HCT116 (cell line): ENCODE measurements at regions of chr11 and their contacts with region 1.

Region 1: GRCh38 chr11:68257475-68258362 is 14.1 kb downstream of the C11orf24 start:
- DNase-seq: peak; percentile 81
- ATAC-seq: peak; percentile 88
- H3K4me3 ChIP-seq: 0 out of 4 replicates have a peak overlapping the region, but pooled peaks of 1 of the 2 experiments have one; percentile 18
- H3K27ac ChIP-seq: no peak overlapping the region
- H3K4me1 ChIP-seq: peaks cover 3 to 17% of the 10 kb centered on the region in 2 experiments; a peak in 3 of 4 replicates
- H3K27me3 ChIP-seq: no peaks in the 10 kb centered on the region
- CTCF ChIP-seq: peak; percentile 79 to 94 (median 81)
- POLR2A ChIP-seq: no peak
- RAD21 ChIP-seq: peak; percentile 99

Region 2: GRCh38 chr11:68271781-68272608 is 14.3 kb after region 1 on chr11 and contains the start of gene C11orf24:
- CTCF ChIA-PET with region 1: interaction called, 10 read pairs
- POLR2A ChIA-PET with region 1: no interaction called
- RAD21 ChIA-PET with region 1: interaction called in 1 of 2 experiments, 3 read pairs
- intact Hi-C with region 1: no loop called
- DNase-seq: peak; percentile 79
- ATAC-seq: peak; percentile 86
- H3K4me3 ChIP-seq: peak within 1 kb of the TSS; percentile 97 to 98
- H3K27ac ChIP-seq: peak within 1 kb of the TSS; percentile 90
- H3K4me1 ChIP-seq: peaks cover 29 to 60% of the 10 kb centered on the region in 2 experiments
- H3K27me3 ChIP-seq: no peaks in the 10 kb centered on the region
- CTCF ChIP-seq: no peak
- POLR2A ChIP-seq: peak; percentile 87
- RAD21 ChIP-seq: no peak
- total RNA-seq, gene C11orf24: 37.8 TPM

Region 3: DNA sequence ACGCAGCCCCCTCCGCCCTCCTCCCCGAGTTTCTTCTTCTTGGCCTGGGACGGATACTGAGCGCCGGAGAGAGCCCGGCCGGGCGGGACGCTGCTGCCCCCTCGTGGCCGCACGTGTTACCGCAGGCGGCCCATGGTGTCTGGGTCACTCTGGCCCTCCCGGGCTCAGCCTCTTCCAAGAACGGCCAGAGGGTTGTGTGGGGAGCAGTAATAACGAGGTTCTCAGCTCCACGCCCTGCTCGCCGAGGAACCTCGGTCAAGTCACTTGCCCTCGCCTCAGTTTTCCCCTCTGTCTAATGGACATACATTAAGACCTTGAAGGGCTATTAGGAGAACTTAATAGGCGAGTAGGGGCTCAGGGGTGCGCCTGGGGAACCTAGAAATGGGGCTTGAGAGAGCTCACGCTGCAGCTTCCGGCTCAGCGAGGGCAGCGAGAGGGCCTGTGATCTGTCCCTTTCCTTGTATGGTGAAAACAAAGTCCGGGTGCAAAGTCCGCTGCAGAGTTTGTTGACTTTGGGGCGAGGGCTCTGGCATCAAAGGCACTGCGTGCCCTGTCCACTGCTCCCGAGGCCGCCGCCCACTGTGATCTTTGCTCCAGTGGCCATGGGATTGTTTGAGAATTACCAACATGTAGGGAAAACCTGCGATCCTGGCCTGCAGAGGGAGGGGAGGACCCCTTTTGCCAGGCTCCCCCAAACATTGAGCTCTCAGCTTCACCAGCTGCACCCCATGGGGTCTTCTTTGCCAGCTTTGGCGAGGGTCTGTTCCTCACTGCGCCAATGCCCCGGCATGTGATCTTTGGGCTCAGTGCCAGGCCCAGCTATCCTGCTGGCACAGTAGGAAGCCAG is 40.3 kb after region 1 on chr11:
- CTCF ChIA-PET with region 1: interaction called, 21 read pairs
- POLR2A ChIA-PET with region 1: interaction called, 3 read pairs
- RAD21 ChIA-PET with region 1: interaction called, 6 to 12 read pairs
- intact Hi-C with region 1: loop called (anchors 1 kb)
- DNase-seq: peak; percentile 52
- ATAC-seq: peak; percentile 97
- H3K4me3 ChIP-seq: peak overlapping the region in 1 of 2 experiments; percentile 19; a peak in 2 of 4 replicates
- H3K27ac ChIP-seq: no peak overlapping the region
- H3K4me1 ChIP-seq: peaks cover 18 to 35% of the 10 kb centered on the region in 2 experiments
- H3K27me3 ChIP-seq: no peaks in the 10 kb centered on the region
- CTCF ChIP-seq: peak; percentile 94 to 97 (median 96)
- POLR2A ChIP-seq: no peak
- RAD21 ChIP-seq: peak; percentile 98

Region 4: DNA sequence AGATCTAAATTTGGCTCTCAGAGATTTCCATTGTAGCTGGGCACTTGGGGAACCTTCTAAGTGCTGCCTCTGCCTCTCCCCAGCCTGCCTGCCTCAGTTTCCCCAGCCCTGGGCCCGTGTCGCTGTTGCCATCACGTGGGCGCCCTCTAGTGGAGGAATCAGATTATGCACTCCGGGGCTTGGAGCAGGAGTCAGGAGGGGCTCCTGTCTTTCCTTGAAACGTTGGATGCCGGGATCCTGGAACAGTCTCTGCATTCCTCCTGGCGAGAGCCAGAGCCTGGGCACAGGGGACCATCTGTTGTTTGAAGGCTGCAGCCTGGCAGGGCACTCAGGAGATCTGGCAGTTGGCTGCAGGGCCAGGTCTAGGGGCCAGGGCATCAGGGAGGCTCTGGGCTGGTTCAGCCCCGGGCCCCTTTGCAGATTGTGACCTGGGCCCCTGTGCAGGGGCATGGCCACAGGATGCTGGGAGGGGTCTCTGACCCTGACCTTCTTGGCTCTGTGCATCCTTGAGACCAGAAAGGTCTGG is 126.3 kb after region 1 on chr11:
- CTCF ChIA-PET with region 1: no interaction called
- POLR2A ChIA-PET with region 1: no interaction called
- RAD21 ChIA-PET with region 1: interaction called, 3 read pairs
- intact Hi-C with region 1: loop called (anchors 2 kb)
- DNase-seq: peak; percentile 24
- ATAC-seq: peak; percentile 80
- H3K4me3 ChIP-seq: no peak overlapping the region
- H3K27ac ChIP-seq: no peak overlapping the region
- H3K4me1 ChIP-seq: no peaks in the 10 kb centered on the region; a peak in 1 of 4 replicates
- H3K27me3 ChIP-seq: no peaks in the 10 kb centered on the region
- CTCF ChIP-seq: peak; percentile 86 to 98 (median 92)
- POLR2A ChIP-seq: no peak
- RAD21 ChIP-seq: peak; percentile 96

Region 5: GRCh38 chr11:68447015-68447801 is 189.5 kb after region 1 on chr11:
- CTCF ChIA-PET with region 1: interaction called, 3 read pairs
- POLR2A ChIA-PET with region 1: no interaction called
- RAD21 ChIA-PET with region 1: no interaction called
- intact Hi-C with region 1: loop called (anchors 1 kb)
- DNase-seq: peak; percentile 35
- ATAC-seq: peak; percentile 98
- H3K4me3 ChIP-seq: no peak overlapping the region
- H3K27ac ChIP-seq: no peak overlapping the region
- H3K4me1 ChIP-seq: no peaks in the 10 kb centered on the region
- H3K27me3 ChIP-seq: no peaks in the 10 kb centered on the region
- CTCF ChIP-seq: peak; percentile 68 to 92 (median 88)
- POLR2A ChIP-seq: no peak
- RAD21 ChIP-seq: peak; percentile 89